Stomach (tissue), 19 donors: ENCODE measurements at regions of chr15 and their contacts with region 1.

Region 1: DNA sequence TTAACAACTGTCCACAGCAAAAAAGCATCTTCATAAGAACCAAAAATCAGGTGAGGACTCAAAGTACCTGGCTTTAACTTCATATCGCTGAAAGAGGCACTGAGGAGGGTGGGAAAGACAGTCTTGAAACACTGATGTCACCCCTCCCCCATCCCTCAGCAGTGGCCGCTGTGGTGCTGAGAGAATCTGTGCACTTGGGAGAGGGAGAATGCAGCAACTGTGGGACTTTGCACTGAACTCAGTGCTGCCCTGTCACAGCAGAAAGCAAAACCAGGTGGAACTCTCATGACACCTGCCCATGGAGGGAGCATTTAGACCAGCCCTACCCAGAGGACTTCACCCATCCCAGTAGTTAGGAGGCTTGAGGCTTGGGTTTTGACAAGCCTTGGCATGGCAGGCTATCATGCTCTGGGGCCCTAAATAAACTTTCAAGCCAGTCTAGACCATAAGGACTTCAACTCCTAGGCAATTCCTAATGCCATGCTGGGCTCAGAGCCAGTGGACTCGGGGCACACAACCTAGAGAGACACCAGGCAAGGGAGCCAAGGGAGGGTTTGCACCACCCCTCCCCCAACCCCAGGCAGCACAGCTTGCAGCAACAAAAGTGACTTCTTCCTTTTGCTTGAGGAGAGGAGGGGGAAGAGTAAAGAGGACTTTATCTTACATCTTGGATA is 6.1 kb upstream of the ZSCAN2 start:
- DNase-seq: no peak
- H3K4me3 ChIP-seq: no peak overlapping the region
- H3K27ac ChIP-seq: no peak overlapping the region
- H3K4me1 ChIP-seq: peaks cover 0 to 13% (median 6%) of the 10 kb centered on the region in 4 donors
- H3K27me3 ChIP-seq: no peaks in the 10 kb centered on the region
- CTCF ChIP-seq: no peak
- EP300 ChIP-seq: no peak
- POLR2A ChIP-seq: no peak

Region 2: DNA sequence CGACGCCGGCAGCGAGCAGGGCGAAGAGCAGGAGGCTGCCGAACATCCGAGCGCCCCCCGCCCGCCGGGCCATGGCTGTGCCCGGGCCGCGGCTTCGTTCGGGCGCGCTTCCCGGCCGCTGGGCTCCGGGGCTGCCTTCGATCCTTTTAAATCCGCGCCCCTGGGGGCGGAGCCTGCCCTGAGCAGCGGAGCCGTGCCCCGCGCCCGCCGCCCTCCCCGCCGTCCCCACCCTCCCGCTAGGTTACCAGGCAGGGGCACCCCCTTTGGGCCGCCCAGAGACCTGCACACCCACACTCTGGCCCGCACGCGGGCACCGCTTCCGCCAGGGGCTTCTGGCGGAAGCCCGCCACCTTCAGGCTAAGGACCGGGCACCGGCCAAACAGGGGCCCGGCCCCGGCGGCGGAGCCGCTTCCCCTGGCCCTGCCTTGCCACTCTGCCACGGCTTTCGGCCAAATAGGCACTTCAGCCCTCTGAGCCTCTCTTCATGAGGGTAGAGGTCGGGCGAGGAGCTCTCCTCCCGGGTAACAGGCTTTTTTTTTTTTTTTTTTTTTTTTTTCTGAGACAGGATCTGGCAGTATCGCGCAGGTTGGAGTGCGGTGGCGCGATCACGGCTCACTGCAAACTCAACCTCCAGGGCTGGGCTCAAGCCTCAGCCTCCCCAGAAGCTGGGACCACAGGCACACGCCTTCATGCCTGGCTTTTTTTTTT is 63.5 kb after region 1 on chr15 and contains the start of gene NMB:
- intact Hi-C with region 1: loop called (anchors 5 kb)
- DNase-seq: peak; percentile 82 to 95
- H3K4me3 ChIP-seq: peak within 1 kb of the TSS; percentile 52 to 73 (median 62)
- H3K27ac ChIP-seq: peak within 1 kb of the TSS; percentile 82 to 90 (median 87)
- H3K4me1 ChIP-seq: peaks cover 19 to 45% (median 36%) of the 10 kb centered on the region in 4 donors
- H3K27me3 ChIP-seq: no peaks in the 10 kb centered on the region
- CTCF ChIP-seq: peak in 5 of 7 experiments; percentile 20 to 80 (median 72)
- EP300 ChIP-seq: no peak
- POLR2A ChIP-seq: no peak
- total RNA-seq, gene NMB: 2.0 TPM in 1 of 5 donors, not detected in the others